Aorta (tissue), 5 donors: ENCODE measurements at regions of chr5 and their contacts with region 1.

Region 1: GRCh38 chr5:129767906-129768380 is 20.0 kb downstream of the MINAR2 start:
- DNase-seq: peak in 1 of 2 donors; percentile 52
- ATAC-seq: peak; percentile 89
- H3K4me3 ChIP-seq: no peak overlapping the region
- H3K27ac ChIP-seq: no peak overlapping the region
- H3K4me1 ChIP-seq: no peaks in the 10 kb centered on the region
- H3K27me3 ChIP-seq: no peaks in the 10 kb centered on the region

Region 2: DNA sequence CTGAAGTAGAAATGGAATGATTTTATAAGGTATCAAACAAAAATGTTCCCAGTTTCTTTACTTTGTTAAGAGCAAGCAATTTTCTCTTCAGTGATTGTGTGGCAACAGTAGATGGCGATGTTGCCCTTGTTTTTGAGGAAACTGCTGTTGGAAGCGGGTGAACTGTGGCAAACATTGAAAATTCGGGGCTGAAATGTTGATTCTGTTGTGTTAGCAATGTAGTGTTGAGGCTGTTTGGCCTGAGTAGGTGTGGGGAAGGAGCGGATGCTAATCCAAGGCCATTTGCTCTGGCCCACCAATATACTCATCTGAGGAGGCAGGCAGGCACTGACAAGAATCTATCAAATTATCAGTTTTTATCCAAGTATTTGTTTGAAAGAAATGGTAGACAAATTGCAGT is 1554.6 kb before region 1 on chr5:
- intact Hi-C with region 1: loop called in 1 of 2 experiments (anchors 5 kb)
- DNase-seq: no peak
- ATAC-seq: no peak
- H3K4me3 ChIP-seq: no peak overlapping the region
- H3K27ac ChIP-seq: no peak overlapping the region
- H3K4me1 ChIP-seq: no peaks in the 10 kb centered on the region
- H3K27me3 ChIP-seq: no peaks in the 10 kb centered on the region

Region 3: DNA sequence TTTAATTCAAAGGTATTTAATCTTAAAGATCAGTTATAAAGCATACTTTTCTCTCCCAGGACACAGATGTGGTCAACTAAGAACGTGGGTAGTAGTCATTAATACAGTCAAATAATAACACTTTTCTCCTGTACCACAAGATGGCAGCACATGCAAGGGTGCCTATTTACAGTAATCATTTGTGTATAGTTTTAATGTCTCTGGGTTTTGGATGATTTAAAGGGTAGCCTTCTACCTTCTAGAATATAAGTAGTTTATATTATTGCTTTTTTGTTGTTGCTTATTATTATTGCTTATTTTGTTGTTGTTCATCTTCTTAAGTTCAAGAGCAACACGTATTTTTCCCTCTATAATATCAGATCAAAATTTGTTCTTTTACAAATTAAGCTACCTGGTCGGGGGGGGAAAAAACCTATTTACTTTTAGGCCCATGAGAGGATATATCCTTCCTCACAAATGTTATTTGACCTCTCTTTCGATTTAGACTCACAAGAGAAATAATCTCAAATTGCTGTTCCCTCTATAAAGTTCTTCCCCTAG is 862.3 kb before region 1 on chr5:
- intact Hi-C with region 1: loop called (anchors 5 to 10 kb)
- DNase-seq: no peak
- ATAC-seq: no peak
- H3K4me3 ChIP-seq: no peak overlapping the region
- H3K27ac ChIP-seq: no peak overlapping the region
- H3K4me1 ChIP-seq: no peaks in the 10 kb centered on the region
- H3K27me3 ChIP-seq: no peaks in the 10 kb centered on the region

Region 4: DNA sequence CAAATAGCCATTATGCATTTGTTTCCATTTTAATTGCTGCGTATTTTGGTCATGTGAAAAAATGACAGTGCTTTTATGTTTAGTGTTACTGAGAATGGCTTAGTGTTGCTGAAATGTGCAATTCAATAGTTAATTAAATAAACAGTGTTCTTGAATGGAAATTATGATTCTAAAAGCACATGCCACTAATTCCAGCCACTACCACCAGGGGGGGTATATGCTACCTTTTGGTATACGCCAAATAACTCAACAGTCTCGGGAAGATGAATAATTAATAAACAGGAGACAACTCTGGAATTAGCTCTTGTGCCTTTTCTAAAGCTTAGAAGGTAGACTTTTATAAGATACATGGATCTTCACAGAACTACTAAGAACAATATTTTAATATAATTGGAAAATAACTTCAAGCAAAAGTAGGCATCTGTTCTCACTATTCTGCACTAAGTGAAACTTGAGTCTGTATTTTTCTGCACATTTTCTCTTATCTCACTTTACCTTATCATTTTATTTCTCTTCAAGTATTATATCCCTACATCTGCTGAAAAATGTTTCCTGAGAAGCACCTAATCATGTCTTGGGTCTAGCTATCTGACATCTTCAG is 103.5 kb before region 1 on chr5:
- intact Hi-C with region 1: loop called in 1 of 2 experiments (anchors 5 kb)
- DNase-seq: peak; percentile 50 to 52
- ATAC-seq: no peak
- H3K4me3 ChIP-seq: no peak overlapping the region
- H3K27ac ChIP-seq: no peak overlapping the region
- H3K4me1 ChIP-seq: no peaks in the 10 kb centered on the region
- H3K27me3 ChIP-seq: no peaks in the 10 kb centered on the region

Region 5: GRCh38 chr5:129698661-129699060 is 69.3 kb before region 1 on chr5:
- intact Hi-C with region 1: no loop called
- DNase-seq: no peak
- ATAC-seq: no peak
- H3K4me3 ChIP-seq: no peak overlapping the region
- H3K27ac ChIP-seq: no peak overlapping the region
- H3K4me1 ChIP-seq: no peaks in the 10 kb centered on the region
- H3K27me3 ChIP-seq: no peaks in the 10 kb centered on the region

Region 6: DNA sequence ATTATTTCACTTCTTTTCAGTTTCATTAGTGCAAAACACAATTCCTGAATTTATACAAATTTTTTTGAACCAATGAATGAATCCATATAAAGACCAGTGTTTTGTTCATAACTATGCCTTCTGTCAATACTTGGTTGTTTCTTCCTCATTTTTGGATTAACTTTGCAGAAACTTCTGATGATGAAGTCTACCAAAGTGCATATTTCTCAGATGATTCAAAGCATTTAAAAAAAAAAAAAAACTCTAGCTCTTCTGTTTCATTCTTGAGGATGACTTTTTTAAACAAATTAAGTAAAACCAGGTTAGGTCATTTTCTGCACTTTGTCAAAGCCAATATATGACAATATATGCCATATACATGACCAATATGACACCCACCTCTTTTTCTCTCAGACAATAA is 229.0 kb after region 1 on chr5:
- intact Hi-C with region 1: no loop called
- DNase-seq: no peak
- ATAC-seq: no peak
- H3K4me3 ChIP-seq: no peak overlapping the region
- H3K27ac ChIP-seq: no peak overlapping the region
- H3K4me1 ChIP-seq: peaks cover 0 to 2% of the 10 kb centered on the region in 2 donors
- H3K27me3 ChIP-seq: no peaks in the 10 kb centered on the region

Region 7: DNA sequence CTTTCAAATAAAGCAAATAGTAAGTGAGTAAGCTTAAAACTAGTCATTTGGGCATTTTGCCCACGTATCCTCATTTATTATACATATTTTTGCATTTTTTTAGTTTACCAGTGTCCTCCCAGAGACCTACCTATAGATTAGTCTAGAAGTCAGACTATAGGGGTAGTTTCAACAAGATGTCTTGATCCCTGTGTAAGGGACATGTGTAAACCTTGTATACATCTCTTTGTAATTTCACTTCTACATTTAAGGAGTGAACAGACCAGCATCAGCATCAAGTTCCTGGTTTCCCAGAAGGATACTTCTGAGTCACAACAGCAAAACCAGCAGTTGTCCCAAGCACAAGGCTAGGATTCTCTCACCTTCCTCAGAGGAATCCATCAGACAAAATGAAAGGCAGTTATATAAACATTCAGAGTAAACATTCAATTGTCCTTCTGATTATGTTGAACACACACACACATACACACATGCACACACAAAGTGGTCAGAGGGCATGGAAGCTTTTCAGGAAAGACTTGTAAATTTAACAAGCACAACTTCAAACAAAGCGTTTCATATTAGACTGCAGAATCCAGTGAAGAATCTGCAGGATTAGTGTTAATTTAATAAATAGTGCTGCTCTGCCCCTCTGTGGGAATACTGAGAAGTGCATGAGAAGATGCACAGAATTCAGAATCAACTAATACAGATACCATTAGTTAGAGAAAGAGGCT is 1341.8 kb after region 1 on chr5:
- intact Hi-C with region 1: loop called (anchors 5 to 10 kb)
- DNase-seq: no peak
- ATAC-seq: peak; percentile 73
- H3K4me3 ChIP-seq: no peak overlapping the region
- H3K27ac ChIP-seq: no peak overlapping the region
- H3K4me1 ChIP-seq: no peaks in the 10 kb centered on the region
- H3K27me3 ChIP-seq: no peaks in the 10 kb centered on the region